ENCODE measurements at regions of chr19 and their contacts with region 1.

Region 1: DNA sequence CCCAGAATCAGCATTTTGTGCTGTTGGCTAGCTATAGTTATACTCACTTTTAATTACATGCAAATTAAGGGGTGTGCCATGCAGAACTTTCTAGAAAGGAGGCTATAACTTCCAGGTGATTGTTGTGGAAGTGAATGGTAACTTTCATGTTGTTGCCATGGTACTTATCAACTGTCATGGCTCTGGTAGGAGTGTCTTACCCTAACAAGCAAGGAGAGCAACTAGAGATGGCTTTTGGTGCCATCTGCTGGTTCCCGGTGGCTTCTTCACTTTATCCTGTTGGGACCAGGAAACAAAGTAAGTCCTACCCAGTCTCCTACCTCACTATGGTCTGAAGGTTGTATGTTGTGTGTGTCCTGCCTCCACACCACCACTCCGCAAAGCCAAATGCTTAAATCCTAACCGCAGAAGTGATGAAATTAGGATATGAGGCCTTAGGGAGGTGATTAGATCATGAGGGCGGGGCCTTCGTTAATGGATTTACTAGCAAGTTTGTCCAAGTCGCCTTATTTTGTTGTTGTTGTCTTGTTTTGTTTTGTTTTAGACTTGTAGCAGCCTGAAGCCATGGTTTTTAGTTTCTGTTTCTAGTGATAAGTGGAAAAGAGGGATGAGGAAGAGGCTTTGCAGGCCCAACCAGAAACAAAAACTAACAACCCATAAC is 22.6 kb downstream of the FBXL12 start:
- DNase-seq: peak in 3 of 4 donors; percentile 65 to 90 (median 76)
- ATAC-seq: peak; percentile 31
- H3K4me3 ChIP-seq: no peak overlapping the region
- H3K27ac ChIP-seq: peak overlapping the region in 1 of 2 donors; percentile 64
- H3K4me1 ChIP-seq: peaks cover 0 to 9% of the 10 kb centered on the region in 2 donors
- H3K27me3 ChIP-seq: no peaks in the 10 kb centered on the region
- CTCF ChIP-seq: peak; percentile 63 to 78

Region 2: GRCh38 chr19:9309974-9310446 is 486.2 kb before region 1 on chr19:
- intact Hi-C with region 1: loop called in 1 of 2 experiments (anchors 10 kb)
- DNase-seq: peak in 2 of 4 donors; percentile 92 to 94
- ATAC-seq: peak; percentile 91
- H3K4me3 ChIP-seq: peak overlapping the region; percentile 75 to 89
- H3K27ac ChIP-seq: peak overlapping the region; percentile 95 to 98
- H3K4me1 ChIP-seq: peaks cover 0 to 21% of the 10 kb centered on the region in 2 donors
- H3K27me3 ChIP-seq: no peaks in the 10 kb centered on the region
- CTCF ChIP-seq: no peak

Region 3: GRCh38 chr19:9329999-9330398 is 466.2 kb before region 1 on chr19:
- intact Hi-C with region 1: no loop called
- DNase-seq: no peak
- ATAC-seq: no peak
- H3K4me3 ChIP-seq: no peak overlapping the region
- H3K27ac ChIP-seq: no peak overlapping the region
- H3K4me1 ChIP-seq: peaks cover 0 to 2% of the 10 kb centered on the region in 2 donors
- H3K27me3 ChIP-seq: no peaks in the 10 kb centered on the region
- CTCF ChIP-seq: no peak

Region 4: GRCh38 chr19:9621156-9622037 is 174.8 kb before region 1 on chr19 and contains the start of gene ZNF561:
- intact Hi-C with region 1: loop called in 1 of 2 experiments (anchors 5 kb)
- DNase-seq: peak; percentile 89 to 94 (median 92)
- ATAC-seq: peak; percentile 95
- H3K4me3 ChIP-seq: peak within 1 kb of the TSS; percentile 81 to 88
- H3K27ac ChIP-seq: peak within 1 kb of the TSS; percentile 96
- H3K4me1 ChIP-seq: peaks cover 17 to 30% of the 10 kb centered on the region in 2 donors
- H3K27me3 ChIP-seq: no peaks in the 10 kb centered on the region
- CTCF ChIP-seq: no peak
- polyA plus RNA-seq, gene ZNF561: 53.3 to 73.4 (median 63.1) TPM

Measured in left lung (tissue), 14 donors.